Activated CD8-positive, alpha-beta T cell treated with anti-CD3 and anti-CD28 coated beads for 36 hours (primary cell): ENCODE measurements at regions of chr2 and their contacts with region 1.

Region 1: DNA sequence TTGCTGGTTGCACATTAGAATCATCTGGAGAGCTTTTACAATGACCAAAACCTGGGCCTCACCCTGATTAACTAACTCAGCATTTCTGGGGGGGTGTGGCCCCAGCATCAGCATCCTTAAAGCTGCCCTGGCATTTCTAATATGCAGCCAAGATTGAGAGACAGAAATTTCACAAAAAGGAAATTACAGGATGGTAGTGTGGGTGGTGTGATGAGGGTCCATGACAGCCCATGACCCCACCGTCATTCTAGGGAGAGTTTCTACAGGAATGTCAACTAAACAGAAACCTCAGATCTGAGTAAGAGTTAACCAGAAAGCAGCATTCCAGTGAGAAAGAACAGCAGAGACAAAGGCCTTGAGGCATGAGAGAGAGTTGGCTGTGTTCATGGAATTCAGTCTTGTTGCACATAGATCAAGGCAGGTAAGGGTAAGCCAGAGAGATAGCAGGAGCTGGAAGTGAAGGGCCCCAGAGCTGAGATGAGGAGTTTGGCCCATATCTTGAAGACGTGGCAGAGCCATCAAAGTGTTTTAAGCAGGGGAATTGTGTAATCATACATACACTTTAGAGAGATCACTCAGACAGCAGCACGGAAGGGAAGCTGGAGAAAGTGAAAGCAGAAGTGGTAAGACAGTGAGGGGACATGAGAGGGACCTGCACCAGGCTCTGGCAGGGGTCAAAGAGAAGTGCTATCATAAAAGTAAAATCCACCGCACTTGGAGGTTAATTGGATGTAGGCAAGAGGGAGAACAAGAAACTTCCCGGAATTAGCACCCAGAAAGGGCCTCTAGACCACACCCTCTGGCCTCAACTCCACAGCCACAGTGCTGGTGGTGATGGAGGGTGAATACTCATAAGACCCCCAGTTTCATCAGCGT is 7.8 kb upstream of the TRABD2A start:
- DNase-seq: peak; percentile 79
- ATAC-seq: peak; percentile 93
- H3K4me3 Mint-ChIP-seq: peak overlapping the region; percentile 68
- H3K27ac Mint-ChIP-seq: peak overlapping the region; percentile 92
- H3K4me1 Mint-ChIP-seq: peaks cover 60% of the 10 kb centered on the region
- H3K27me3 Mint-ChIP-seq: no peaks in the 10 kb centered on the region
- CTCF ChIP-seq: no peak

Region 2: DNA sequence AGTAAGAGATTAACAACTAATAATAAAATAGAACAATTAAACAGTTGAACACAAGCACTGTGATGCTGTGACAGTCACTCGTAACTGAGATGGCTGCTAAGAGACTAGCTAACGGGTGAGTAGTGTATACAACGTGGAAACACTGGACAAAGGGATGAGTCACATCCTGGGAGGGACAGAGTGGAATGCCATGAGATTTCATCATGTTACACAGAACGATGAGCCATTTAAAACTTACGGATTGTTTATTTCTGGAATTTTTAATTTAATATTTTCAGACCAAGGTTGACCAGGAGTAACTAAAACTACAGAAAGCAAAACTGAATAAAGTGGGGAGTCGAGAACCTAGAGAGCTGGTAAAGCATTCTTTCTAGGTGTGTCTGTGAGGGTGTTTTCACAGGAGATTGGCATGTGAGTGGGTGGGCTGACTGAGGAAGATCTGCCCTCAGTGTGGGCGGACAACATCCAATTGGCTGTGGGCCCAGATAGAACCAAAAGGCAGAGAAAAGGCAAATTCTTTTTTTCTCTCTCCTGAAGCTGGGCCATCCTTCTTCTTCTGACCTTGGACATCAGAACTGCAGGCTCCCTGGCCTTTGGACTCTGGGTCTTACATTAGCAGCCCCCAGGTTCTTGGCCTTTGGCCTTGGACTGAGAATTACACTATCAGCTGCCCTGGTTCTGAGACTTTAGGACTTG is 31.4 kb after region 1 on chr2:
- CTCF ChIA-PET with region 1: interaction called, 84 read pairs
- POLR2A ChIA-PET with region 1: interaction called, 18 read pairs
- intact Hi-C with region 1: loop called (anchors 2 kb)
- DNase-seq: peak; percentile 85
- ATAC-seq: peak; percentile 82
- H3K4me3 Mint-ChIP-seq: peak overlapping the region; percentile 69
- H3K27ac Mint-ChIP-seq: peak overlapping the region; percentile 96
- H3K4me1 Mint-ChIP-seq: peaks cover 50% of the 10 kb centered on the region
- H3K27me3 Mint-ChIP-seq: no peaks in the 10 kb centered on the region
- CTCF ChIP-seq: no peak